ENCODE measurements at regions of chr3 and their contacts with region 1.

Region 1: DNA sequence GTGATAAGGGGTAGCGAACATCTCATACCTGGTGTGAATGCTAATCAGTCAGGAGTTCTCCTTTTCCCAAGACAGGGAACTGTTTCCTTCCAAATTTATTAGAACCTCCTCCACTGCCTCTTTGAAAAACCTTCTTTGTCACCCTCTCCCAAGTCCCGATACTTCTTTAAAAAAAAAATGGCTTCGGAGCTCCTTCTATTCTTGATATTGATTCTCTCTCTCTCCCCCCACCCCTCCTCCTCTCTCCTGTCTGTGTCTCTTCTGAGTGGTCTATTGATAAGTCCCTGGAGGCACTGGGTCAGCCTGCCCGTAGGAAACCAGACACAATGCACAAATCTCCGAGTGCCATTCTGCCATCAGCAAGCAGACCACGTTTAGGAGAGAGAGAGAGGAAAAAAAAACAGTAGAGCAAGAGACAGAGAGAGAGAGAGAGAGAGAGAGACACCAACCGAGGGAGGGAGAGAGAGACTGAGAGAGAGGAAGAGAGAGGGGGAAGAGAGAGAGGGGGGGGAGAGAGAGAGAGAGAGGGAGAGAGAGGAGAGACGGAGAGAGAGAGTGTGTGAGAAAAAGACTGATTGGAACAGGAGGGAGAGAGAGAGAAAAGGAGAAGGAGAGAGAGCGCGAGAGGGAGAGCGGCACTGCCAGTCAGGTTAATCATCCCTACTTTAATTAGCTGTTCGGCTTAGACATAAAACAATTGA is 160.9 kb downstream of the TIGIT start:
- DNase-seq: no peak
- ATAC-seq: peak; percentile 43
- H3K4me3 Mint-ChIP-seq: no peak overlapping the region
- H3K27ac Mint-ChIP-seq: no peak overlapping the region
- H3K4me1 Mint-ChIP-seq: peaks cover 52% of the 10 kb centered on the region
- H3K27me3 Mint-ChIP-seq: no peaks in the 10 kb centered on the region
- CTCF ChIP-seq: no peak

Region 2: GRCh38 chr3:114428043-114428595 is 26.6 kb before region 1 on chr3:
- CTCF ChIA-PET with region 1: no interaction called
- POLR2A ChIA-PET with region 1: interaction called, 23 read pairs
- intact Hi-C with region 1: loop called (anchors 1 kb)
- DNase-seq: no peak
- ATAC-seq: peak; percentile 90
- H3K4me3 Mint-ChIP-seq: peak overlapping the region; percentile 55
- H3K27ac Mint-ChIP-seq: peak overlapping the region; percentile 90
- H3K4me1 Mint-ChIP-seq: peaks cover 51% of the 10 kb centered on the region
- H3K27me3 Mint-ChIP-seq: no peaks in the 10 kb centered on the region
- CTCF ChIP-seq: no peak

Region 3: DNA sequence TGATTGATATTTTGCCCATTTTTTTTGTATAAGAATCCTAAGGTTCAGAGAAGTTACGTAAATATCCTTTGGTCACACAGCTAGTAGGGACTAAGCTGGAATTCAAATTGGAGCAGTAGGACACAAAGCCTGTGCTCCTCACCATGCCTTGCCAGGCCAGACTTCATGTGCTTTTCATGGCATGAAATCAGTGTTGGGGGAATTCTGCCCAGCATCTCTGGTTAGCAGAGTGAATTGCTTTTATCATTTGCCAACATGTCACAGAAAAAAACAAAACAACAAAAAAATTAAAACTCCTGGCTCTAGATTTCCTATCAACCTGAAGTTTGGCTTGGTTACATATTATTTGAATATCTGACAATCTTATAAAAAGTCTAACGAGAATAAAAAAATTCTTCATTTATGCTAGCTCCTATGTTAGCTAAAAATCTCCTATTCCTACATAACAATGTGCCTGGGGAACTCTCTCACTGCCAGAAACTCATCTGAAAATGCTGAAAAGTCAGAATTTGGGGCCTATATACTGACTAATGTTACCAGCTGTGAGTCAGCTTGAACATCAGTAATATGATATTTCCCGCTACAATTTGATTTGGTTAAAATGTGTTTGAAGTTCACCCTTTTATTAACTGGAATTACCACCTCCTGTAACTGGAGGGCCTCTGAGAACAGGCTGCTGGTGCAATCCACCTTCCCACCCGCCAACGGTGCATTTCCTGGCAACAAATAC is 19.1 kb before region 1 on chr3:
- CTCF ChIA-PET with region 1: interaction called, 3 read pairs
- POLR2A ChIA-PET with region 1: interaction called, 24 read pairs
- intact Hi-C with region 1: no loop called
- DNase-seq: no peak
- ATAC-seq: no peak
- H3K4me3 Mint-ChIP-seq: peak overlapping the region; percentile 8
- H3K27ac Mint-ChIP-seq: peak overlapping the region; percentile 77
- H3K4me1 Mint-ChIP-seq: peaks cover 62% of the 10 kb centered on the region
- H3K27me3 Mint-ChIP-seq: no peaks in the 10 kb centered on the region
- CTCF ChIP-seq: no peak

Region 4: DNA sequence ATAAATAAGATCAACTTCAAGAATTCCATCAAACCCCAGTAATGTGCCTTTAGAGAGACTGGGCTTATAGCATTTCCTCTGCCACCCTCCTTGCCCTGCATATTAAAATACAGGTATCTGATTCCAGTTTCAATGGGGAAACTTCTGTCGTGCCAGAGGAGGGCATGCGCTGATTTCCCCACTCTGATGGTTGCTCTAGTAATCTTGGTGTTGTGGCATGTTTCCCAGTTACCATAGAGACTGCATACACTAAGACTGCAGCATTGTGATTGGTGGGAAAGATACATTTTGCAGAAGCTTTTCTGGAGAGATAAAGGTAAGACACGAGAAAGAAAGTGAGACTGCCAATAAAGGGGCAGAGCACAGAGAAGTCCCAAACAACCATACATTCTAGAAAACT is 64.7 kb after region 1 on chr3:
- CTCF ChIA-PET with region 1: no interaction called
- POLR2A ChIA-PET with region 1: interaction called, 7 read pairs
- intact Hi-C with region 1: loop called (anchors 1 kb)
- DNase-seq: peak; percentile 21
- ATAC-seq: peak; percentile 97
- H3K4me3 Mint-ChIP-seq: no peak overlapping the region
- H3K27ac Mint-ChIP-seq: no peak overlapping the region
- H3K4me1 Mint-ChIP-seq: no peaks in the 10 kb centered on the region
- H3K27me3 Mint-ChIP-seq: no peaks in the 10 kb centered on the region
- CTCF ChIP-seq: no peak

Measured in activated B cell treated with CpG ODN at 0.5 μM for 24 hours (primary cell).